Heart left ventricle (tissue), 16 donors: ENCODE measurements at regions of chr6 and their contacts with region 1.

Region 1: DNA sequence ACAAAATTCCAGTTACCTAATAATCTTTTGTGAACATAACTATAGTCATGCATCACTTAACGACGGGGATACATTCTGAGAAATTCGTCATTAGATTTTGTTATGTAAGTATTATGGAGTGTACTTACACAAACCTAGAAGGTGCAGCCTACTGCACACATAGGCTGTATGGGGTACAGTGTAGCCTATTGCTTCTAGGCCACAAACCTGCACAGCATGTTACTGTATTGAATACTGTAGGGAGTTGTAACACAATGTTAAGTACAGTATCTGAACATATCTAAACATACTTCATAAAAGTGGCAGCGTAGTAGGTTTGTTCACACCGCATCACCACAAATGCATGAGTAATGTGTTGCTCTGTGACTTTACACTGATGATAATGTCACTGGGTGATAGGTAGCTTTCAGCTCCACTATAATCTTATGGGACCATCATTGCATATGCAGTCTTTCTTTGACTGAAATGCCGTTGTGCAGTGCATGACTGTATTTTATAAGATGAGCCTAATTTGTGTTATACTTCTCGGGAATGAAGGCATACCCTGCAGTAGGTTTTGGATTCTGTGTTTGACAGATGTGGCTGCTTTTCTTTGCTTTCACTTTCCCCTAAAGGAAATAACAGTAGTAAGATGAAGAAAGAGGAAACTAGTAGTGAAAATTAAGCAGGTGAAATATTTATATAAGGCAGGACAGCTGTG is 365.6 kb downstream of the FARS2 start:
- DNase-seq: no peak
- ATAC-seq: no peak
- H3K4me3 ChIP-seq: no peak overlapping the region
- H3K27ac ChIP-seq: no peak overlapping the region
- H3K4me1 ChIP-seq: peaks cover 0 to 37% (median 7%) of the 10 kb centered on the region in 12 donors
- H3K27me3 ChIP-seq: no peaks in the 10 kb centered on the region
- CTCF ChIP-seq: no peak
- POLR2A ChIP-seq: no peak

Region 2: DNA sequence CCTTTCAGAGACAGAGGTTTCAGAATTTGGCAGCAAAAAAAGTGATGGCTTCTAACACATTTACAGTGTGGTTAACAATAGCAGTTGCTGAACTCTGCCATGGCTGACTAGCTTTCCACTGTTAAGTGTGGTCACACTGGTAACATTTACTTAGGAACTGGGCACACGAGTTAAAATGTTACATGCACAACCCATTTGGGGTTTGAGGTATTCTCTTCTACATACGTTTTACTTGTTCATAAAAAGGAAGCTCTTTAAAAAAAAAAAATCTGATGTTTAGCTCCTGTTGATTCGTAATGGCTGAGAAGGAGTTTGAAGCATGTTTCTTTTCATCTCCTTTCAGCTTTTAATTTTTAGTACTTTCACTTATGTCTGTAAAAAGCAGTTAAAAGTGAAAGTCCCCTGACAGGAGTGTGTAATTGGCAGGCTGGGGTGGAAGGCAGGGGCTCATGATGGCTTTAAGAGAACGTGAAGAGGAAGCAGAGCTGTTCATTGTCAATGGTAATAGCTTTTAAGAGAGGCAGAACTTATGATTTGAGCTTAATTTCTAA is 119.7 kb before region 1 on chr6:
- intact Hi-C with region 1: loop called in 1 of 10 experiments (anchors 10 kb)
- DNase-seq: no peak
- ATAC-seq: no peak
- H3K4me3 ChIP-seq: no peak overlapping the region
- H3K27ac ChIP-seq: no peak overlapping the region
- H3K4me1 ChIP-seq: peaks cover 0 to 8% (median 0%) of the 10 kb centered on the region in 12 donors
- H3K27me3 ChIP-seq: no peaks in the 10 kb centered on the region
- CTCF ChIP-seq: no peak
- POLR2A ChIP-seq: no peak

Region 3: DNA sequence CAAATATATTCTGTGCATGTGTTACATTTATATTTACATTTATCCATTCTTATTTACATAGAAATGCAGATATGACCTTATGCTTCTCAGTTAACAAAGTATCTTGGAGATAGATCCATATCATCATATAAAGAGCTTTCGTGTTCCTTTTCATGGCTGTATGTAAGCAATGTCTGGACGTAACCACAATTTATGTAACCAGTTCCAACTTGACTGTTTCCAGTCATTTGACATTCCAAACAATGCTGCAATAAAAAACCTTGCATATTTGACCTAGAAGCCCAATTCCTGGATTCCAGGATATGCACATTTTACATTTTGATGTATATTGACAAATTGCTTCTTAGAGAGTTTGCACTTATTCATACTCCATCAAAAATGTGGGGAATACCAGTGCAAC is 807.3 kb after region 1 on chr6:
- intact Hi-C with region 1: loop called in 1 of 10 experiments (anchors 5 kb)
- DNase-seq: no peak
- ATAC-seq: no peak
- H3K4me3 ChIP-seq: no peak overlapping the region
- H3K27ac ChIP-seq: no peak overlapping the region
- H3K4me1 ChIP-seq: no peaks in the 10 kb centered on the region
- H3K27me3 ChIP-seq: no peaks in the 10 kb centered on the region
- CTCF ChIP-seq: no peak
- POLR2A ChIP-seq: no peak